GM13976 (cell line): ENCODE measurements at regions of chr10 and their contacts with region 1.

Region 1: DNA sequence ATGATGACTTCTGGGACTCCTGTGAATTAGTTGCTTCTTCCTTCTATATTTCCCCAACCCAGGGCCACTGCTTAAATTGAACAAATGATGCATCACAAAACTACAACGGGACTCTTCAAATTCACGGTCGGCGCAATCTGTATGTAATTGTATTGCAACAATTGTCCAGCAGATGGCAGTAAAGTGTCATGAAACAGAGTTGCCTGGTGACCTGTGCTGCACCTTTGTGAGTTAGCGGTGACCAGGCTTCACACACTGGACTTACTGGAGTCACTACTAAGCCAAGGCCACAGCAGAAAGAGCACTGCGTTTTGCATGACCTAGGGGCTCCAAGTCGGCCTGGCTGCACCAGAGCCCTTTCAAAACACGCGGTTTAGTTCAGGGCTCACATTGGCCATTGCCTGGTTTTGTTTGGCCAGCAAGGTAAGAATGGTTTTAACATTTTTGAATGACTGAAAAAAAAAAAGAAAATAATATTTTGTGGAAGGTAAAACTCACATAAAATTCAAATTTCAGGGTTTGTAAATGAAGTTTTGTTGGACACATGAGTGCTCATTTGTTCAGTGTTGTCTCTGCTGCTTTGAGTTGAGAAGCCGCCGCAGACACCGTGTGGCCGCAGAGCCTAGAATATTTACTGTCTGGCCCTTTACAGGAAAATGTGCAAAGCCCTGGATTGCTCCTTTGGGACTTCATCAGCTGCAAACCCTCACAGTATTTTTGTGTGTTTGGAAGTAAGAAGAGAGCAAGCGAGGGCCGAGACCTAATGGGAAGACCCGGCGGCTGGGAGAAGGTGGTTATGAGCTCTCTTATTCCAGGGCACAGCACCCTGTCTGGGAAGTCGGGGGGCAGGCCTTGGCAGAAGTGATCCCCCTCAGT is 23.2 kb upstream of the ZNF32 start:
- DNase-seq: peak; percentile 81
- CTCF ChIP-seq: peak; percentile 73

Region 2: DNA sequence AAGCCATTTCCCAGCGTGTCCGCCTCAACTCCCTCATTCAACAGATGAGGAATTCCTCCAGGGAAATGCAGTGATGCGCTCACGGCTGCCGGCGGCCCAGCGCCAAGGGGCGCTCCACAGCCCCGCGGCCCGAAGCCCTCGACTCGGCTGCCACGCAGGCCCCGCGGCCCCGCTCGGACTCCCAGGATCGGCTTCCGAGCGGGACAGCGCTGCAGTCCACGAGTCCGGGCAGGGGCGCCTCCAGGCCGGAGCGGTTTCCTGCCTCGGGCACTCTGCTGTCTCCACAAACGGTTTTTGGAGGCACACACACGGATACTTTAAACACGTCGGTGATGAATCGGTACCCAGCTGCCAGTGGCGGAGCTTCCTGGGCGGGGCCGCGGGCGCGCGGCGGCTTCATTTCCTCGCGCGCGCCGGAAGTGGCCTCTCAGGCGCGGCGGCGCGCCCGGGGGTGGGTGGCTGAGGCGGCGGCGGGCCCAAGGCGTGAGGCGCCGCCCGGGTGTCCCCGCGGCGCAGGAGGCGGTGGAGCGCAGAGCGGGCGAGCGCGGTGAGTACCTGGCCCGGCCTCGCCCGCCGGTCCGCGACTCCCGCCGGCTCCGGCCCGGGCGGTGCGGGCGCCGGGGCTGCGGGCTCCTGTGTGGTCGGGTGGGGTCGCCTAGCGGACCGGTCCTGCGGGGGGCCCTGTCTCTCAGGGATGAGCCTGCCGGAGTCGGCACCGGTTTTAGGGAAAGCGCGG is 533.7 kb before region 1 on chr10 and contains the start of gene CSGALNACT2:
- in situ Hi-C with region 1: no loop called
- DNase-seq: peak; percentile 92
- CTCF ChIP-seq: no peak

Region 3: GRCh38 chr10:43491855-43492254 is 180.0 kb before region 1 on chr10:
- in situ Hi-C with region 1: no loop called
- DNase-seq: no peak
- CTCF ChIP-seq: no peak

Region 4: GRCh38 chr10:44386546-44387052 is 714.7 kb after region 1 on chr10:
- in situ Hi-C with region 1: loop called (anchors 25 kb)
- DNase-seq: peak; percentile 90
- CTCF ChIP-seq: peak; percentile 91

Region 5: DNA sequence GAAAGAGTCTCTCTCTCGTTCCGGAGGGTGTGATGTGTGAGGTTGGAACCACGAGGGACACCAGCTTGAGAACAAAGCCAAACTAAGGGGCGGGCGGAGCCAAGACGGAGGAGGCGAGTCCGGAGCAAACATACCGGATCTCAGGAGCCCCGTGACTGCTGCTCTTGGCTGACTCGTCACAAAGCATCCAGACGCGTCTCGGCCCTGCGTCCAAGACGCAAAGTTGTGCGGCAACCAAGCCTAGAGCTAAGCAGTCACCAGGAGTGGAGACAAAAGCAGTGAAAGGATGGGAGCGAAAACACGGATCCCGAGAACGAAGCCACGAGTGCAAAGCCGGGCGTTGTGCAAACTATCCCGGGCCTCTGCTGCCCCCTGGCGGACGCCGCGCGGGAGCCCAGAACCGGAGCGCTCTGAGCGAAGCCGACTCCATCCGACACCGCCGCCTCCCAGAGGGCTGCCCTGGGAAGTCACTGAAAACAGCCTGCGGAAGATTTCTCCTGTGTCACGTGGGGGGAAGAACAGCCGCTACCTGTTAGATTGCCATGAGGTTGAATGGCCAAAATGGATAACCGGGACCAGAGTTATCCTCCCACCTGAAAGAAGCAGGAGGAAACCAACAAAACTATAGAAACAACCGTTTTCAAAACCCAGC is 1192.9 kb after region 1 on chr10:
- in situ Hi-C with region 1: loop called (anchors 25 kb)
- DNase-seq: peak; percentile 91
- CTCF ChIP-seq: peak; percentile 90